ENCODE measurements at regions of chr4 and their contacts with region 1.

Region 1: GRCh38 chr4:47562297-47562696 is 77.2 kb downstream of the ATP10D start:
- DNase-seq: no peak
- H3K4me3 ChIP-seq: no peak overlapping the region
- H3K27ac ChIP-seq: no peak overlapping the region
- H3K4me1 ChIP-seq: no peaks in the 10 kb centered on the region
- H3K27me3 ChIP-seq: no peaks in the 10 kb centered on the region
- CTCF ChIP-seq: no peak
- POLR2A ChIP-seq: no peak

Region 2: GRCh38 chr4:47349326-47349725 is 213.0 kb before region 1 on chr4:
- intact Hi-C with region 1: no loop called
- DNase-seq: no peak
- H3K4me3 ChIP-seq: no peak overlapping the region
- H3K27ac ChIP-seq: no peak overlapping the region
- H3K4me1 ChIP-seq: no peaks in the 10 kb centered on the region
- H3K27me3 ChIP-seq: no peaks in the 10 kb centered on the region
- CTCF ChIP-seq: no peak
- POLR2A ChIP-seq: no peak

Region 3: GRCh38 chr4:47463235-47463956 is 98.9 kb before region 1 on chr4 and contains the start of gene COMMD8:
- intact Hi-C with region 1: loop called (anchors 5 kb)
- DNase-seq: peak; percentile 95
- H3K4me3 ChIP-seq: peak within 1 kb of the TSS; percentile 71 to 87
- H3K27ac ChIP-seq: peak within 1 kb of the TSS; percentile 80 to 83
- H3K4me1 ChIP-seq: no peaks in the 10 kb centered on the region
- H3K27me3 ChIP-seq: no peaks in the 10 kb centered on the region
- CTCF ChIP-seq: peak in 3 of 4 experiments; percentile 11 to 63 (median 60)
- POLR2A ChIP-seq: peak; percentile 53
- total RNA-seq, gene COMMD8: 11.9 to 12.2 TPM